ENCODE measurements at regions of chr10 and their contacts with region 1.

Region 1: DNA sequence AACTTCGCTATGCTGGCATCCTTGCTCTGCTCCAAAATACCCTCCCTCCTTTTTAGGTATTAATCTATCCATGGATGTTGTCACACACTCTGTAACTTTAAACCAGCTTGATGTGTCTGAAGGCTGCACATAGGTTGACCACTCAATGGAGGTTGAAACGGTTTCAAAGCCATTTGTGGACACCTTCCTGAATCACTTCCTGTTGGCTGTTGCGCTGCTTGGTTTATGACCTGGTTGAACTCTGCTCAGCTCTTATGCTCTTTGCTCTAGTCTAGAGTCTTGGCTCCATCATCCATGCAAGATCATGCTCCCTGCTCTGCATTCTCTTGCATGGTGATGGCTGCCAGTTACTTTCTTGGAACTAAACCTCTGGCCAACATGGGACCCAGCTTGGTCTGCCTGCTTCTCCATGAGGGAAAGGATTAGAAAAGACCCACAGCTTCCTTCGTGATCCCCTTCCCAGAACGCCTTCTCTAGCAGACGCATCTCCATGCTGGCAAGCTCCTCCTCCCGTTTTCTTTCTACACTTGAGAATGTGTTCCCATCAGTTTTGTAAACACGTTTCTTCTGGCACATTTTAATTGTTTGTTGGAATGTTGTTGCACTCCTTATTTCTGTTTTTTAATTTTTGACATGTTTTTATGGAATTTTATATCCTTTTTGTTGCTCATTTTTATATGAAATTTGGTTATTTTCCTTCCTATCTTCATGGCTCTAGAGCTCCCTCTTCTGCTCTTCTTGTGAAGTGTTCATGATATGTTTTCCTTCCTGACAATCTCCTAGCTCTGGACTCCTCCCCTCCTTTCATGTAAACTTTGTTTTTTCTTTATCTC is 149.8 kb downstream of the XPNPEP1 start:
- DNase-seq: no peak
- H3K4me3 ChIP-seq: no peak overlapping the region
- H3K27me3 ChIP-seq: no peaks in the 10 kb centered on the region; the same call in 1 of the 2 replicates
- CTCF ChIP-seq: peak; percentile 64

Region 2: DNA sequence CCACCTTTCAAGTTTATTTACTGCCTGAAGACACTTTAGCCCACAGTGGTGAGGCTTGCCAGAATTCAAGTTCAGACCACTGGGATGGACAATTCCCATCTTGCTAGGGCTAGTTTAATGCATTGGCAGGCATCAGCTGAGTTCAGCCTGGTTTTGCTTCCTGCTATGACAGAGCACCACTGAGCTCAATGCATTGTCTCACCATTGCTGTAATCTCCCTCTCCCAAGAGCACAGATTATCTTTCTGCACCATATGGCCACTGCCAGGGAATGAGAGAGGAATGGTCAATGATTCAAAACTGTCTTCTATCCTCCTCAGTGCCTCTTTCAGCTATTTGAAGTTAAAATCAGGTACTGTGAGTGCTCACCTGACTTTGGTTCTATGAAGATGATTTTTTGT is 10.9 kb before region 1 on chr10:
- CTCF ChIA-PET with region 1: interaction called, 10 read pairs
- POLR2A ChIA-PET with region 1: no interaction called
- DNase-seq: no peak
- H3K4me3 ChIP-seq: no peak overlapping the region
- H3K27me3 ChIP-seq: no peaks in the 10 kb centered on the region
- CTCF ChIP-seq: no peak

Region 3: GRCh38 chr10:109784236-109784635 is 10.7 kb after region 1 on chr10:
- CTCF ChIA-PET with region 1: interaction called, 21 read pairs
- POLR2A ChIA-PET with region 1: no interaction called
- DNase-seq: no peak
- H3K4me3 ChIP-seq: no peak overlapping the region
- H3K27me3 ChIP-seq: no peaks in the 10 kb centered on the region
- CTCF ChIP-seq: no peak

Region 4: GRCh38 chr10:109866995-109867635 is 93.6 kb after region 1 on chr10:
- CTCF ChIA-PET with region 1: no interaction called
- POLR2A ChIA-PET with region 1: no interaction called
- DNase-seq: no peak
- H3K4me3 ChIP-seq: no peak overlapping the region
- H3K27me3 ChIP-seq: no peaks in the 10 kb centered on the region
- CTCF ChIP-seq: no peak